ENCODE measurements at regions of chr11 and their contacts with region 1.

Region 1: GRCh38 chr11:95790123-95790932 is at the start of gene CEP57:
- DNase-seq: peak; percentile 92
- ATAC-seq: peak; percentile 73
- H3K4me3 ChIP-seq: peak within 1 kb of the TSS; percentile 87
- H3K27ac ChIP-seq: peak within 1 kb of the TSS; percentile 90
- H3K4me1 ChIP-seq: 0 out of 2 replicates have a peak, but pooled peaks cover 3% of the 10 kb centered on the region
- H3K27me3 ChIP-seq: no peaks in the 10 kb centered on the region
- CTCF ChIP-seq: no peak
- EP300 ChIP-seq: 0 out of 4 replicates have a peak, but pooled peaks of 1 of the 2 experiments have one; percentile 40
- POLR2A ChIP-seq: peak; percentile 77
- RAD21 ChIP-seq: no peak
- polyA plus RNA-seq, gene CEP57: 19.4 to 25.8 TPM

Region 2: GRCh38 chr11:94973099-94973968 is 817.0 kb before region 1 on chr11 and contains the starts of genes CWC15 and KDM4D:
- CTCF ChIA-PET with region 1: no interaction called
- POLR2A ChIA-PET with region 1: no interaction called
- RAD21 ChIA-PET with region 1: no interaction called
- SMC1A ChIA-PET with region 1: no interaction called
- in situ Hi-C with region 1: no loop called
- intact Hi-C with region 1: loop called (anchors 10 kb)
- DNase-seq: peak; percentile 62
- ATAC-seq: peak; percentile 99
- H3K4me3 ChIP-seq: peak within 1 kb of the TSS; percentile 95
- H3K27ac ChIP-seq: peak within 1 kb of the TSS; percentile 78
- H3K4me1 ChIP-seq: no peaks in the 10 kb centered on the region
- H3K27me3 ChIP-seq: no peaks in the 10 kb centered on the region
- CTCF ChIP-seq: no peak
- EP300 ChIP-seq: no peak
- POLR2A ChIP-seq: peak; percentile 96
- RAD21 ChIP-seq: 0 out of 2 replicates have a peak, but pooled peaks have one; percentile 1
- polyA plus RNA-seq, gene CWC15: 122 to 142 TPM
- polyA plus RNA-seq, gene KDM4D: 0.63 to 0.69 TPM

Region 3: GRCh38 chr11:95089620-95090542 is 700.4 kb before region 1 on chr11 and contains the start of gene ENDOD1:
- CTCF ChIA-PET with region 1: interaction called, 4 read pairs
- POLR2A ChIA-PET with region 1: interaction called, 7 read pairs
- RAD21 ChIA-PET with region 1: no interaction called
- SMC1A ChIA-PET with region 1: no interaction called
- in situ Hi-C with region 1: no loop called
- intact Hi-C with region 1: loop called (anchors 5 kb)
- DNase-seq: no peak
- ATAC-seq: peak; percentile 93
- H3K4me3 ChIP-seq: peak within 1 kb of the TSS; percentile 94
- H3K27ac ChIP-seq: peak within 1 kb of the TSS; percentile 84
- H3K4me1 ChIP-seq: peaks cover 27% of the 10 kb centered on the region
- H3K27me3 ChIP-seq: no peaks in the 10 kb centered on the region
- CTCF ChIP-seq: peak in 1 of 3 experiments; percentile 9; a peak in 1 of 6 replicates
- EP300 ChIP-seq: no peak
- POLR2A ChIP-seq: peak; percentile 93
- RAD21 ChIP-seq: no peak
- polyA plus RNA-seq, gene ENDOD1: 6.0 to 6.4 TPM

Region 4: GRCh38 chr11:95778699-95779098 is 11.6 kb before region 1 on chr11:
- CTCF ChIA-PET with region 1: interaction called, 9 read pairs
- POLR2A ChIA-PET with region 1: interaction called, 29 read pairs
- RAD21 ChIA-PET with region 1: interaction called, 11 read pairs
- SMC1A ChIA-PET with region 1: interaction called, 37 read pairs
- in situ Hi-C with region 1: no loop called
- intact Hi-C with region 1: no loop called
- DNase-seq: no peak
- ATAC-seq: peak; percentile 77
- H3K4me3 ChIP-seq: no peak overlapping the region
- H3K27ac ChIP-seq: no peak overlapping the region
- H3K4me1 ChIP-seq: peaks cover 6% of the 10 kb centered on the region; the same call in 1 of the 2 replicates
- H3K27me3 ChIP-seq: no peaks in the 10 kb centered on the region
- CTCF ChIP-seq: no peak
- EP300 ChIP-seq: no peak
- POLR2A ChIP-seq: no peak
- RAD21 ChIP-seq: no peak

Region 5: DNA sequence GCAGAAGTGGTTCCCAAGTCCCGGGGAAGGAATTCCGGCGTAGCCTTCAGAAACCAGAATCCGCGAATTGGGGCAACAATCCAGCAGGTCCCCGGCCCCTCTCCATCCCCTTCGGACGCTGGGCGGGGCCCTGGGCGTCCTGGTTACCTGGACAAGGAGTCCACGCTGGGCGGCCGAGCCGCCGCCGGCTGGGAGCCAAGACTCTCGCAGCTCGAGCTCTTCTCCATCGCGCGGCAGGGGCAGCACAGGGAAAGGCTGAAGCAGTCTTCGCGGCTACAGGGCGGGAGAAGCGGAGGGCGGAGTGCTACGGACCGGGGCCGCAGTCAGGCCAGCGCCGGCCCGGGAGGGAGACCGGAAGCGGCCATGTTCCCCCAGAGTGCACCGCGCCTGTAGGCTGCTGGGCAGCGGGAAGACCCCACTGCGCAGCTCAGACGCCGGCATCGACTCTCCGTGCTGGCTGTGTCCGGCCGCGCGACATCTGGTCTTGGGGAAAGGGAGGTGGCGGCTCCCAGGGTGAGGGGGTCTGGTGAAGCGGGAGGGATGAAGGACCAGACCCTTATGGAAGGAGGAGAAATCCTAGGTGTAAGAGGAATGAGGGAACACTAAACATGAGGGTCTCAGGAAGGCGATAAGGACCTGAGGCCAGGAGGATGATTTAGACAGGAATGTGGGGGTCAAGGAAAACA is 133.5 kb after region 1 on chr11 and contains the start of gene MTMR2:
- CTCF ChIA-PET with region 1: no interaction called
- POLR2A ChIA-PET with region 1: interaction called, 3 read pairs
- RAD21 ChIA-PET with region 1: interaction called, 3 read pairs
- SMC1A ChIA-PET with region 1: interaction called, 3 read pairs
- in situ Hi-C with region 1: no loop called
- intact Hi-C with region 1: loop called (anchors 5 kb)
- DNase-seq: peak; percentile 16
- ATAC-seq: peak; percentile 99
- H3K4me3 ChIP-seq: peak within 1 kb of the TSS; percentile 94
- H3K27ac ChIP-seq: peak within 1 kb of the TSS; percentile 90
- H3K4me1 ChIP-seq: no peaks in the 10 kb centered on the region
- H3K27me3 ChIP-seq: no peaks in the 10 kb centered on the region
- CTCF ChIP-seq: no peak
- EP300 ChIP-seq: peak in 1 of 2 experiments; percentile 23; a peak in 1 of 4 replicates
- POLR2A ChIP-seq: peak; percentile 100
- RAD21 ChIP-seq: no peak
- polyA plus RNA-seq, gene MTMR2: 7.6 to 9.8 TPM

Region 6: GRCh38 chr11:96023275-96023674 is 232.9 kb after region 1 on chr11:
- CTCF ChIA-PET with region 1: no interaction called
- POLR2A ChIA-PET with region 1: no interaction called
- RAD21 ChIA-PET with region 1: no interaction called
- SMC1A ChIA-PET with region 1: no interaction called
- in situ Hi-C with region 1: no loop called
- intact Hi-C with region 1: no loop called
- DNase-seq: no peak
- ATAC-seq: no peak
- H3K4me3 ChIP-seq: no peak overlapping the region
- H3K27ac ChIP-seq: no peak overlapping the region
- H3K4me1 ChIP-seq: no peaks in the 10 kb centered on the region; the same call in 1 of the 2 replicates
- H3K27me3 ChIP-seq: no peaks in the 10 kb centered on the region
- CTCF ChIP-seq: no peak
- EP300 ChIP-seq: no peak
- POLR2A ChIP-seq: no peak
- RAD21 ChIP-seq: no peak

Region 7: GRCh38 chr11:96424693-96425092 is 634.4 kb after region 1 on chr11:
- CTCF ChIA-PET with region 1: no interaction called
- POLR2A ChIA-PET with region 1: no interaction called
- RAD21 ChIA-PET with region 1: no interaction called
- SMC1A ChIA-PET with region 1: interaction called, 3 read pairs
- in situ Hi-C with region 1: no loop called
- intact Hi-C with region 1: loop called (anchors 5 kb)
- DNase-seq: no peak
- ATAC-seq: no peak
- H3K4me3 ChIP-seq: no peak overlapping the region
- H3K27ac ChIP-seq: no peak overlapping the region
- H3K4me1 ChIP-seq: no peaks in the 10 kb centered on the region
- H3K27me3 ChIP-seq: no peaks in the 10 kb centered on the region
- CTCF ChIP-seq: no peak
- EP300 ChIP-seq: no peak
- POLR2A ChIP-seq: no peak
- RAD21 ChIP-seq: no peak

Region 8: DNA sequence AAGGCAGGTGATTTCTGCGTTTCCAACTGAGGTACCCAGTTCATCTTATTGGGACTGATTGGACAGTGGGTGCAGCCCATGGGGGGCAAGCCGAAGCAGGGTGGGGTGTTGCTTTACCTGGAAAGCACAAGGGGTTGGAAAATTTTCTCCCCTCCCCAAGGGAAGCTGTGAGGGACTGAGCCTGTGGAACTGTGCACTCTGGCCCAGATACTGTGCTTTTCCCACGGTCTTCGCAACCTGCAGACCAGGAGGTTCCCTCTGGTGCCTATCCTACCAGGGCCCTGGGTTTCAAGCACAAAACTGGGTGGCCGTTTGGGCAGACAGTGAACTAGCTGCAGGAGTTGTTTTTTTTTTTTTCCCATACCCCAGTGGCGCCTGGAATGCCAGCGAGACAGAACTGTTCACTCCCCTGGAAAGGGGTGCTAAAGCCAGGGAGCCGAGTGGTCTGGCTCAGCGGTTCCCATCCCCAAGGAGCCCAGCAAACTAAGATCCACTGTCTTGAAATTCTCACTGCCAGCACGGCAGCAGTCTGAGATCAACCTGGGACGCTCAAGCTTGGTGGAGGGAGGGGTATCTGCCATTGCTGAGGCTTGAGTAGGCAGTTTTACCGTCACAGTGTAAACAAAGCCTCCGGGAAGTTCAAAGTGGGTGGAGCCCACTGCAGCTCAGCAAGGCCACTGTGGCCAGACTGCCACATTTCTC is 696.7 kb after region 1 on chr11:
- CTCF ChIA-PET with region 1: no interaction called
- POLR2A ChIA-PET with region 1: no interaction called
- RAD21 ChIA-PET with region 1: no interaction called
- SMC1A ChIA-PET with region 1: no interaction called
- in situ Hi-C with region 1: no loop called
- intact Hi-C with region 1: no loop called
- DNase-seq: no peak
- ATAC-seq: no peak
- H3K4me3 ChIP-seq: no peak overlapping the region
- H3K27ac ChIP-seq: no peak overlapping the region
- H3K4me1 ChIP-seq: no peaks in the 10 kb centered on the region
- H3K27me3 ChIP-seq: no peaks in the 10 kb centered on the region; a peak in 2 of 4 replicates
- CTCF ChIP-seq: no peak
- EP300 ChIP-seq: no peak
- POLR2A ChIP-seq: no peak
- RAD21 ChIP-seq: no peak